ENCODE measurements at regions of chr19 and their contacts with region 1.

Region 1: GRCh38 chr19:7595466-7596133 is at the start of gene CAMSAP3:
- DNase-seq: peak; percentile 71
- H3K4me3 ChIP-seq: peak within 1 kb of the TSS; percentile 2 to 72 (median 58)
- H3K27ac ChIP-seq: peak within 1 kb of the TSS; percentile 34 to 81 (median 72)
- H3K4me1 ChIP-seq: peaks cover 0 to 9% (median 6%) of the 10 kb centered on the region in 4 donors
- H3K27me3 ChIP-seq: peaks cover 53% of the 10 kb centered on the region
- CTCF ChIP-seq: no peak
- EP300 ChIP-seq: no peak
- POLR2A ChIP-seq: no peak
- total RNA-seq, gene CAMSAP3: 36.2 to 114 (median 61.6) TPM

Region 2: DNA sequence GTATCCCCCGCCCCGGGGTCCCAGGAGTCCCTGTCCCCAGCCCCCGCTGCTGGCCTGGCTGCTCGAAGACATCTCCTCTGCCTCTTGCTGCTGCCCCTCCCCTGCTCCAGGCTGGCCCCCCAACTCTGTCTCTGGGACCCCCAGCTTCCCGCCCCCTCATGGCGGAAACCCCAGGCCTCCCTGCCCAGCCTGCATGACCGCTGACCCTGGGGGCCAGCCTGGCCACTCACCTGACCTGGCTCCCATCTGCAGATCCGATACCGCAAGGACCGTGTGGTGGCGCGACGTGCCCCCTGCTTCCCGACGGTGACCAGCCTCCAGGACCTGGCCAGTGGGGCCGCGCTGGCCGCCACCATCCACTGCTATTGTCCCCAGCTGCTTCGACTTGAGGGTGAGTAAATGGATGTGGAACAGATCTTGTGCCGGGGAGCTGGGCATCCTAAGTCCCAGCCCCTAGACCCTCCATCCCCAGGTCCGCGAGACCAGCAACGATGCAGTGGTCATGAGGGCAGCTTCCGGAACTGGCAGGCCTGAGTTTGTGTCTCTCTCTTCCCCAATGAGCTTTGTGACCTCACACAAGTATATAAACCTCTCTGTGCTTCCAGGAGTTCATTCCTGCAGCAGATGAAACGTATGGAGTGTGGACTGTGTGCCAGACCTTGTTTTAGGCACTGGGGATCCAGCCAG is 12.4 kb after region 1 on chr19:
- in situ Hi-C with region 1: no loop called
- intact Hi-C with region 1: loop called (anchors 1 kb)
- DNase-seq: no peak
- H3K4me3 ChIP-seq: no peak overlapping the region
- H3K27ac ChIP-seq: no peak overlapping the region
- H3K4me1 ChIP-seq: no peaks in the 10 kb centered on the region
- H3K27me3 ChIP-seq: no peaks in the 10 kb centered on the region
- CTCF ChIP-seq: no peak
- EP300 ChIP-seq: no peak
- POLR2A ChIP-seq: no peak

Region 3: GRCh38 chr19:7641288-7642276 is 46.0 kb after region 1 on chr19:
- in situ Hi-C with region 1: no loop called
- intact Hi-C with region 1: no loop called
- DNase-seq: no peak
- H3K4me3 ChIP-seq: no peak overlapping the region
- H3K27ac ChIP-seq: no peak overlapping the region
- H3K4me1 ChIP-seq: peaks cover 0 to 7% (median 4%) of the 10 kb centered on the region in 4 donors
- H3K27me3 ChIP-seq: peaks cover 8% of the 10 kb centered on the region
- CTCF ChIP-seq: no peak
- EP300 ChIP-seq: no peak
- POLR2A ChIP-seq: no peak